ENCODE measurements at regions of chr6 and their contacts with region 1.

Region 1: GRCh38 chr6:85569323-85569722 is 24.3 kb downstream of the SNX14 start:
- DNase-seq: peak; percentile 50
- H3K4me3 ChIP-seq: no peak overlapping the region
- H3K27ac ChIP-seq: no peak overlapping the region
- H3K4me1 ChIP-seq: no peaks in the 10 kb centered on the region
- H3K27me3 ChIP-seq: no peaks in the 10 kb centered on the region
- CTCF ChIP-seq: no peak

Region 2: GRCh38 chr6:85081102-85081501 is 488.2 kb before region 1 on chr6:
- CTCF ChIA-PET with region 1: no interaction called
- POLR2A ChIA-PET with region 1: no interaction called
- intact Hi-C with region 1: no loop called
- DNase-seq: no peak
- H3K4me3 ChIP-seq: no peak overlapping the region
- H3K27ac ChIP-seq: no peak overlapping the region
- H3K4me1 ChIP-seq: peaks cover 28% of the 10 kb centered on the region
- H3K27me3 ChIP-seq: no peaks in the 10 kb centered on the region
- CTCF ChIP-seq: no peak

Region 3: GRCh38 chr6:85547719-85548118 is 21.6 kb before region 1 on chr6:
- CTCF ChIA-PET with region 1: no interaction called
- POLR2A ChIA-PET with region 1: no interaction called
- intact Hi-C with region 1: loop called (anchors 1 kb)
- DNase-seq: no peak
- H3K4me3 ChIP-seq: no peak overlapping the region
- H3K27ac ChIP-seq: no peak overlapping the region
- H3K4me1 ChIP-seq: no peaks in the 10 kb centered on the region
- H3K27me3 ChIP-seq: no peaks in the 10 kb centered on the region
- CTCF ChIP-seq: no peak